A549 (cell line): ENCODE measurements at regions of chr19 and their contacts with region 1.

Region 1: GRCh38 chr19:48152551-48152950 is 17.6 kb downstream of the LIG1 start:
- DNase-seq: peak; percentile 81 to 82
- ATAC-seq: peak; percentile 68 to 72
- H3K4me3 ChIP-seq: no peak overlapping the region
- H3K27ac ChIP-seq: peak overlapping the region; percentile 3 to 55; a peak in 3 of 6 replicates
- H3K4me1 ChIP-seq: peaks cover 11% of the 10 kb centered on the region; the same call in 2 of the 3 replicates
- CTCF ChIP-seq: peak; percentile 97
- EP300 ChIP-seq: no peak
- POLR2A ChIP-seq: no peak
- RAD21 ChIP-seq: peak; percentile 83 to 91

Region 2: GRCh38 chr19:48061401-48062344 is 90.9 kb before region 1 on chr19:
- CTCF ChIA-PET with region 1: interaction called, 10 read pairs
- POLR2A ChIA-PET with region 1: no interaction called
- DNase-seq: no peak
- ATAC-seq: peak; percentile 30 to 47; a peak in 2 of 6 replicates
- H3K4me3 ChIP-seq: no peak overlapping the region
- H3K27ac ChIP-seq: no peak overlapping the region
- H3K4me1 ChIP-seq: no peaks in the 10 kb centered on the region
- CTCF ChIP-seq: no peak
- EP300 ChIP-seq: no peak
- POLR2A ChIP-seq: no peak
- RAD21 ChIP-seq: no peak

Region 3: DNA sequence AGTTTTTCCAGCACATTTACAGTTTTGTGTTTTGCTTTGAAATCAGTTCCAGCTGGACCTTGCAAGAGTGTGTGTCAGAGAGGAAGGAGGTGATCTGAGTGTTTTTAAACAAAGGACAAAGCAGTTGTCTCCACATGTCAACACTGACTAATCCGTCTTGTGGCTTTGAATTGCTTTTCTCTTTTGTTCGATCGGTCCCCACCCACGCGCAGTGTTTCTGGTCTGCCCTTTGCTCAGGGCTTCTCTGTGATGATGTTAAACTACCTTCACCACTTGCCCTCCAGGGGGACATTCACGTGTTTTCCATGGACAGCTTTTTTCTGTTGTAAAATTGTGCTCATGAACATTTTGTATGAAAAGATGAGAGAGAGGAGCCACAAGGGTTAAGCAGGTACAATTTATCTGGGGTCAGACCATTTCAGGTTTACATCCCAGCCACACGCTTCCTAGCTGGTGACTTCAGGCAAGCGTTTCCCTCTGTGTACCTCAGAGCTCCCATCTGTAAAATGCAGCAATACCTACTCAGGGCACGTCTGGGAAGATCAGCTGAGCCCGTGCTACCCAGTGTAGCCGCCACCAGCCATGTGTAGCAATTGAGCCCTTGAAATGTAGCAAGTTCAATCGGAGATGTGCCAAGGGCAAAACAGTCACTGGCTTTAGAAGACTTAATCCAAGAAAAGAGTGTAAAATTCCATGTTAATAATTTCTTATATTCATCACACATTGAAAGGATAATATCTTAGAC is 28.5 kb before region 1 on chr19:
- CTCF ChIA-PET with region 1: interaction called, 18 read pairs
- POLR2A ChIA-PET with region 1: no interaction called
- DNase-seq: peak in 1 of 2 experiments; percentile 36
- ATAC-seq: peak; percentile 34 to 35; a peak in 2 of 6 replicates
- H3K4me3 ChIP-seq: no peak overlapping the region
- H3K27ac ChIP-seq: no peak overlapping the region
- H3K4me1 ChIP-seq: no peaks in the 10 kb centered on the region
- CTCF ChIP-seq: no peak
- EP300 ChIP-seq: no peak
- POLR2A ChIP-seq: no peak
- RAD21 ChIP-seq: no peak

Region 4: GRCh38 chr19:48170038-48170812 is 17.7 kb after region 1 on chr19 and contains the starts of genes LIG1 and ZSWIM9:
- CTCF ChIA-PET with region 1: interaction called, 15 read pairs
- POLR2A ChIA-PET with region 1: interaction called, 3 read pairs
- DNase-seq: peak; percentile 97 to 99
- ATAC-seq: peak; percentile 88 to 94
- H3K4me3 ChIP-seq: peak within 1 kb of the TSS; percentile 94
- H3K27ac ChIP-seq: peak within 1 kb of the TSS; percentile 92 to 93
- H3K4me1 ChIP-seq: peaks cover 14% of the 10 kb centered on the region; the same call in 2 of the 3 replicates
- CTCF ChIP-seq: no peak
- EP300 ChIP-seq: no peak
- POLR2A ChIP-seq: peak; percentile 80
- RAD21 ChIP-seq: no peak
- polyA plus RNA-seq, gene LIG1: 41.2 and 54.9 TPM in 2 replicates
- polyA plus RNA-seq, gene ZSWIM9: 0.97 and 1.2 TPM in 2 replicates

Region 5: DNA sequence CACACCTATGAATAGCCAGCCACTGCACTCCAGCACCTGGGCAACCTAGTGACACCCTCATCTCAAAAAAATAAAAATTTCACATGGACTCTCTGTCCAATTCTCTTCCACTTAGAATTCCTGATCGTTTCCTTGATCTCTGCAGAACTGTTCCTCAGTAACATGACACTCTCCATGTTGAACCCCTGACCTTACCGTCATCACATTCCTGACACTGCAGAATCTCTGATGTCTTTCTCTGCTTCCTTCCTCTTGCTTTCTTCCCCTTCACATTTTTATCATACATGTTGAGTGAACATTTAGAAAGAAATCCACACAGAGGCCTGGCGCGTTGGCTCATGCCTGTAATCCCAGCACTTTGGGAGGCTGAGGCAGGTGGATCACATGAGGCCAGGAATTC is 132.3 kb after region 1 on chr19:
- CTCF ChIA-PET with region 1: no interaction called
- POLR2A ChIA-PET with region 1: no interaction called
- DNase-seq: no peak
- ATAC-seq: no peak
- H3K4me3 ChIP-seq: no peak overlapping the region
- H3K27ac ChIP-seq: no peak overlapping the region
- H3K4me1 ChIP-seq: no peaks in the 10 kb centered on the region
- CTCF ChIP-seq: no peak
- EP300 ChIP-seq: no peak
- POLR2A ChIP-seq: no peak
- RAD21 ChIP-seq: no peak